H1 (cell line): ENCODE measurements at regions of chr5 and their contacts with region 1.

Region 1: GRCh38 chr5:167555565-167556166 is 735.8 kb upstream of the WWC1 start:
- DNase-seq: no peak
- H3K4me3 ChIP-seq: no peak overlapping the region
- H3K27ac ChIP-seq: no peak overlapping the region
- H3K4me1 ChIP-seq: peaks cover 0 to 4% (median under 1%) of the 10 kb centered on the region in 4 experiments; a peak in 2 of 7 replicates
- H3K27me3 ChIP-seq: no peaks in the 10 kb centered on the region
- CTCF ChIP-seq: no peak; a peak in 1 of 4 replicates
- EP300 ChIP-seq: no peak
- POLR2A ChIP-seq: no peak
- RAD21 ChIP-seq: peak; percentile 50 to 51

Region 2: DNA sequence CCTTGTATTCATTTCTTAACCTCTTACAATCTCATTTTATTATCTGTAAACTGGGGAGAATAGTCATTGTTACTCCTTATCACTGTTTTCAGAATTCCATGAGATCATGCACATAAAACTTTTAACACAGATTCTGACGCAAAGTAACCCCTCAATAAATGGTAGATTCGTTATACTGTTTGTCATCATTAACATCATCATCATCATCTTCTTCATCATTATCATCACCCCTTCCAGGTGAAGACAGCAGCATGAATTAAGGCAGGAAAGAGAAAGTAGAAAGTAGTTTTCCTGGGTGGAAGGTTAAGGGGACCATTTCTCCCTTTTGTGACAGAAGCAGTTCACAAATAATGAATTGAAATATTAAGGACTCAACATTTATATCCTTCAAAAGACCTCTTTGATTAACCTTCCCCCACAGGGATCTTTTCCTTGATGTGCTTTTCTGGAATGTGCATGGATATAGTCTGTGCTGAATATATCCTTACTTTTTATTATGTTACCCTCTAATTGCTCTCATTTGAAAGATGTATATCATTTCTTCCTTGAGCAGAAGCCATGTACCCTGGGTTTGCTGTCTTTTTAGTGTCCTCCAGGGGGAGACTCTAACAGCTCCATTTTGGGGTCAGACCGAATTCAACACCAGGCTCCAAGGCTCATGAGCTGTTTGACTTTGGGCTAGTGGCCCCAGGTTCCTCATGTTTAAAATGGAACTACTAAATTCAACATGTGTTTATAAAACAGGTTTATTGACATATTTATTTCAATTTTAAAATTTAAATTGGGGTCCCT is 294.2 kb before region 1 on chr5:
- CTCF ChIA-PET with region 1: interaction called, 15 read pairs
- POLR2A ChIA-PET with region 1: no interaction called
- DNase-seq: peak in 1 of 2 experiments; percentile 17
- H3K4me3 ChIP-seq: no peak overlapping the region
- H3K27ac ChIP-seq: no peak overlapping the region
- H3K4me1 ChIP-seq: no peaks in the 10 kb centered on the region
- H3K27me3 ChIP-seq: no peaks in the 10 kb centered on the region; a peak in 1 of 7 replicates
- CTCF ChIP-seq: peak; percentile 35 to 69 (median 67)
- EP300 ChIP-seq: no peak
- POLR2A ChIP-seq: no peak
- RAD21 ChIP-seq: peak; percentile 83 to 90

Region 3: DNA sequence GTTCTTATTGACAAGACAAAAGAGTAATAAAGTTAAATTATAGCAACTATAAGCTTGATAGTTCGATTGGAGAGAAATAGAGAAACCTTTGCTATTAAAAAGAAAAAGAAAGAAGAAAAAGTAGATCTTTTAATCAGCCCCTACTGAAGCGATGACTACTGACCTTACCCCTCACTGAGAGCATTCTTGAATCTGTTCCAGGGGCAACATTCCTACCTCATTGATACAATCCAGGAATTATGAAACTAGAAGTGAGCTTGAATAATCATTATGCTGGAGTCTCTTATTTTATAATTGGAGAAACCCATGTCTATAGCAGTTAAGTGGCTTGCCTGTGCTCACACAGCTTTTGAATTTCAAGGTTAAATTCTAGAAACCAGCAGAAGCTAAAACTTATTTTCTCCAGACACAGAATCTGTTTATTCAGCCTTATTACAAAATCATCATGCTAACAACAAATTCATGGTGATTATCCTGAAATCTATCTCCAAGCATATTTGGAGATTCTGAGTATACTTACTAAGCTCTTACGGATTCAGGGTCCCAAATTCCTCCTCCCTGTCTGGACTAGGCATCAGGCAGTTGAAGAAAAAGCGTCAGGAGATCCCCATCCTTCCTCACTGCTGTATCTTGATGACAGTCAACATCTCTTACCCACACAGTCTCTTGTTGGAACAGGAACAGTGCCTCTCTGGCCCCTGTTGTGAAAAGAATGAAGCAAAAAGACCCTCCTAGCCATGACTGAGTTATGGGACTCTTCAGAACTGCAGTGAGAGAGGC is 188.2 kb after region 1 on chr5:
- CTCF ChIA-PET with region 1: no interaction called
- POLR2A ChIA-PET with region 1: no interaction called
- DNase-seq: no peak
- H3K4me3 ChIP-seq: no peak overlapping the region
- H3K27ac ChIP-seq: no peak overlapping the region
- H3K4me1 ChIP-seq: peaks cover 0 to 3% (median 0%) of the 10 kb centered on the region in 4 experiments; a peak in 3 of 7 replicates
- H3K27me3 ChIP-seq: no peaks in the 10 kb centered on the region
- CTCF ChIP-seq: no peak
- EP300 ChIP-seq: no peak
- POLR2A ChIP-seq: no peak
- RAD21 ChIP-seq: no peak